Mammary epithelial cell (primary cell): ENCODE measurements at regions of chr5 and their contacts with region 1.

Region 1: DNA sequence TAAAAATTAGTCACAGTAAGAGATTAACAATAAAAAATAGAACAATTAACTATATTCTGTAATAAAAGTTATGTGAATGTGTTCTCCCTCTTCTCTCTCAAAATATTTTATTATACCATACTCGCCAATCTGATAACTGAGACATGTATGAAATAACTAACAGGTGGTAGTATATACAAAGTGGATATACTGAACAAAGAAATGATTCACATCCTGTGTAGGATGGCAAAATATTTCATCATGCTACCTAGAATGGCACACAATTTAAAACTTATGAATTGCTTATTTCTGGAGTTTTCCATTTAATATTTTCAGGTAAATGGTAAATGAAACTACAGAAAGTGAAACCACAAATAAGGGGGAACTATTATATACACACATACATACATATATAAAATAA is 152.5 kb downstream of the RNF180 start:
- DNase-seq: peak; percentile 26
- H3K4me3 ChIP-seq: no peak overlapping the region
- H3K27ac ChIP-seq: peak overlapping the region; percentile 68
- H3K4me1 ChIP-seq: no peaks in the 10 kb centered on the region
- H3K27me3 ChIP-seq: no peaks in the 10 kb centered on the region
- CTCF ChIP-seq: no peak

Region 2: GRCh38 chr5:64768358-64769312 is 450.5 kb after region 1 on chr5 and contains the starts of genes CWC27 and SREK1IP1:
- CTCF ChIA-PET with region 1: no interaction called
- dilution Hi-C with region 1: no loop called
- in situ Hi-C with region 1: no loop called
- intact Hi-C with region 1: loop called (anchors 10 kb)
- DNase-seq: peak; percentile 89
- H3K4me3 ChIP-seq: peak within 1 kb of the TSS; percentile 82 to 89 (median 86)
- H3K27ac ChIP-seq: peak within 1 kb of the TSS; percentile 96
- H3K4me1 ChIP-seq: peaks cover 40% of the 10 kb centered on the region
- H3K27me3 ChIP-seq: no peaks in the 10 kb centered on the region
- CTCF ChIP-seq: peak in 1 of 2 donors; percentile 34
- total RNA-seq, gene CWC27: 12.5 to 26.4 TPM
- total RNA-seq, gene SREK1IP1: 14.5 to 41.5 TPM